K562 (cell line): ENCODE measurements at regions of chr7 and their contacts with region 1.

Region 1: DNA sequence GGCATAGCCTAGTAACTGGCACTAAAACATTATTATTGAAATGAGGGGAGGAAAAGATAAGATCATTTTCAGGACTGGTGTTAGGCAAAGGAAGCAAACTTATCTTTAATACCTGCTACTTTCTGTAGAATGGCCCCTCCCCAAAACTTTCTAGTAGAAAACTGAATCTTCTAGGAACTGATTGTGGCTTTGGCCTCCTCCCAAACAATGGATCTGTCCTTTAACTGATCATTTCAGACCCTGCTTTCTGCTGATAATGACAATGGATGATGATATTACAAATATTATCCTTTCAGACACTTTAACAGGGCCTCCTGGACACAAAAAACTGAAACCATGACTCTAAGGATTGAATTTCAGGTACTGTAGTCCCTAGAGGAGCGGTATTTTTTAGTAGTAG is 55.1 kb downstream of the EZH2 start:
- DNase-seq: peak in 2 of 4 experiments; percentile 42 to 71
- ATAC-seq: peak; percentile 29
- H3K4me3 ChIP-seq: no peak overlapping the region
- H3K27ac ChIP-seq: peak overlapping the region; percentile 5; the same call in 2 of the 3 replicates
- H3K4me1 ChIP-seq: peaks cover 0 to 12% of the 10 kb centered on the region in 2 experiments; a peak in 4 of 5 replicates
- H3K27me3 ChIP-seq: no peaks in the 10 kb centered on the region
- CTCF ChIP-seq: no peak
- EP300 ChIP-seq: peak; percentile 55; the same call in 1 of the 2 replicates
- POLR2A ChIP-seq: no peak
- RAD21 ChIP-seq: no peak

Region 2: DNA sequence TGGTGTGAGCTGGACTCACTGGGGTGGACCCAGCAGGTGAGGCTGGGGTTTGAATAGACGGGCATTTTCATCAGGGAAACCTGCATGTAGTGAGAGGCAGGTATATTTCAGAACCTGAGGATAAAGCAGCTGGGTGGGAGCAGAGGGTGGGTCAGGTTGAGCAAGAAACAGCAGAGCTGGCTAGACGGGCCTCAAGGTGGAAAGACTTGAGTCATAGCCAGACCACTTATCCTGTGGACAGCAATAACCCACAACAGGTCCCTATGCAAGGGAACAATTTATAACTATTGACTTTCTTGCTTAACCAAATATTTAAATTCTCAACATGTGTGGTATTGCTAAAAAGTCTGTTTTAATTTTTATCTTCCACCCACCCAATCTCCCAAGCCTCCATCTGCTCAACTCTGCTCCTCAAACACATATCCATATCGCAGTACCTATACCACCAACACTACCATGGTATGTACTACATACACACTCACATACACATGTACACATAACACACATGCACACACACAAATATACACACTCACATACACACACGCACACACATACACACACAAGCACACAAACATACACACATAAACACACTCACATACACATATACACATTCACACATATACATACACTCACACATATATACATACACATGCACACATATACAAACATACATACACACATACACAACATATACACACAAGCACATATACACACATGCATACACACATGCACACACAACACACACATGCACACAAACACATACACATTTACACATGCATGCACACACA is 367.4 kb before region 1 on chr7:
- CTCF ChIA-PET with region 1: no interaction called
- POLR2A ChIA-PET with region 1: no interaction called
- in situ Hi-C with region 1: no loop called
- intact Hi-C with region 1: no loop called
- DNase-seq: no peak
- ATAC-seq: no peak
- H3K4me3 ChIP-seq: no peak overlapping the region
- H3K27ac ChIP-seq: no peak overlapping the region
- H3K4me1 ChIP-seq: no peaks in the 10 kb centered on the region
- H3K27me3 ChIP-seq: peaks cover 2 to 17% of the 10 kb centered on the region in 2 experiments; a peak in 3 of 5 replicates
- CTCF ChIP-seq: no peak
- EP300 ChIP-seq: no peak
- POLR2A ChIP-seq: no peak
- RAD21 ChIP-seq: no peak

Region 3: DNA sequence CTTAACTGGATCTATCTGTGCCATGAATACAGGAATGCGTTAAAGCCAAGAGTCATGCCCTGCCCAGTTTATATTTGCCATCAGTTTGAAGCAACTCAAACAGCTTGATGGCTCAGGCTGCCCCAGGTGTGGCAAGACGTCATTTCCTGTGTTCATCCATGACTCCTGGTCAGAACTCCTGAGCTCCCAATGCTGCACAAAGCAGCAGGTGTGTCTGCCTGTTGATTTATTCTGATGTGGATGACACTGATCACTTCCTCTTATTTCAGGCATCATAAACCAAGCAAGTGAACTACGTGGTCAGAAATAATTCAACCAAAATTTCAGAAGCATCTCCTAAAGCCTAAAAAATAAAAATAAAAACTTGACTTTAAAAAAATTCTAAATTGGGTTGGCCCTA is 13.4 kb before region 1 on chr7:
- CTCF ChIA-PET with region 1: no interaction called
- POLR2A ChIA-PET with region 1: interaction called, 13 read pairs
- in situ Hi-C with region 1: no loop called
- intact Hi-C with region 1: no loop called
- DNase-seq: no peak
- ATAC-seq: no peak
- H3K4me3 ChIP-seq: no peak overlapping the region
- H3K27ac ChIP-seq: no peak overlapping the region
- H3K4me1 ChIP-seq: no peaks in the 10 kb centered on the region
- H3K27me3 ChIP-seq: no peaks in the 10 kb centered on the region
- CTCF ChIP-seq: no peak
- EP300 ChIP-seq: no peak
- POLR2A ChIP-seq: no peak
- RAD21 ChIP-seq: no peak

Region 4: GRCh38 chr7:148849393-148850098 is 20.6 kb after region 1 on chr7:
- CTCF ChIA-PET with region 1: no interaction called
- POLR2A ChIA-PET with region 1: interaction called, 10 read pairs
- in situ Hi-C with region 1: no loop called
- intact Hi-C with region 1: no loop called
- DNase-seq: peak in 2 of 4 experiments; percentile 37 to 56
- ATAC-seq: peak; percentile 43
- H3K4me3 ChIP-seq: no peak overlapping the region
- H3K27ac ChIP-seq: peak overlapping the region; percentile 6; the same call in 2 of the 3 replicates
- H3K4me1 ChIP-seq: peaks cover 24 to 63% of the 10 kb centered on the region in 2 experiments
- H3K27me3 ChIP-seq: no peaks in the 10 kb centered on the region
- CTCF ChIP-seq: no peak
- EP300 ChIP-seq: no peak; the same call in 1 of the 2 replicates
- POLR2A ChIP-seq: no peak
- RAD21 ChIP-seq: no peak